ENCODE measurements at regions of chr5 and their contacts with region 1.

Region 1: DNA sequence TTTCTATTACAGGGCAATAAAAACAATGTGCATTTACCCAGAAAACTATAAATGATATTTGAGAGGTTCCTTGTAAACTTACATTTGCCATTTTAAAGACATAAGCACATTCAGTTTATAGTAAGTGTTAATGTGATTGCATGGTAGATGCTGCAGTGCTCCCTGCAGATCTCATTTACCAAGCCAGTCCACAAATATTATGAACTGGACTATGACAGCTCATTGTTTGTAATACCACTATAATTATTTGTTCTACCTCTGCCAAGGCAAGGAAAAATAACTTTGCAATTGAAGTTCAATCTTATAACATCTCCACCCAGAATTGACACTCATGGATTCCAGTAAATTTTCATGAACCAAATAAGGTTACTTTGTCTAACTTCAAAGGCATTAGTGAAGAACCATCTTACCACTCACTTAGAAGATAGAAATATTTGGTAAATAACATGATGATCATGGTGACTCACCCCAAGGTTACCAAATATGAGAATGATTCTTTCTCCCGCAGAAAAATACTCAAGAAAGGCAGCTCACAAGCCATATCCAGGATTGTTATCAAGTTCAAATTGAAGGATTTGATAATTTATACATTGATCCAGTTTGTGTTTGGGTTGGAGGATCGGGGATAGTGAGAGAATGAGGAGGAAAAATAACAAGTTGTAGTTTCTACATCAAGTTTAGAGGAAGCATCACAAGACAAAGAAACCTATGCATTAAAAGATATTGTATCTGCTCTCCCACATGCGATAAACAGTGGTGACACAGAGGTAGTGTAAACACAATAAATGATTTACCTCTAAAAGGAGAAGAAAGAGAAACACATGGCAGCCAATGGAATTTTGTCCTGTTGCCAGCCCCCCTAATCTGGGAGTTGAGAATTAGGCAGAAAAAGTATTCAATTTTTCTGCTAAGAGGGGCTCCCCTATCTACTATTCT is 29.5 kb downstream of the CDH9 start:
- DNase-seq: peak; percentile 60
- ATAC-seq: peak; percentile 87
- H3K4me3 ChIP-seq: peak overlapping the region; percentile 22
- H3K27ac ChIP-seq: peak overlapping the region; percentile 80
- H3K4me1 ChIP-seq: peaks cover 21% of the 10 kb centered on the region
- H3K27me3 ChIP-seq: no peaks in the 10 kb centered on the region
- CTCF ChIP-seq: no peak

Region 2: GRCh38 chr5:26578002-26578401 is 430.9 kb before region 1 on chr5:
- CTCF ChIA-PET with region 1: no interaction called
- POLR2A ChIA-PET with region 1: no interaction called
- intact Hi-C with region 1: loop called (anchors 5 kb)
- DNase-seq: no peak
- ATAC-seq: peak; percentile 57
- H3K4me3 ChIP-seq: no peak overlapping the region
- H3K27ac ChIP-seq: no peak overlapping the region
- H3K4me1 ChIP-seq: peaks cover 9% of the 10 kb centered on the region
- H3K27me3 ChIP-seq: no peaks in the 10 kb centered on the region
- CTCF ChIP-seq: no peak

Region 3: DNA sequence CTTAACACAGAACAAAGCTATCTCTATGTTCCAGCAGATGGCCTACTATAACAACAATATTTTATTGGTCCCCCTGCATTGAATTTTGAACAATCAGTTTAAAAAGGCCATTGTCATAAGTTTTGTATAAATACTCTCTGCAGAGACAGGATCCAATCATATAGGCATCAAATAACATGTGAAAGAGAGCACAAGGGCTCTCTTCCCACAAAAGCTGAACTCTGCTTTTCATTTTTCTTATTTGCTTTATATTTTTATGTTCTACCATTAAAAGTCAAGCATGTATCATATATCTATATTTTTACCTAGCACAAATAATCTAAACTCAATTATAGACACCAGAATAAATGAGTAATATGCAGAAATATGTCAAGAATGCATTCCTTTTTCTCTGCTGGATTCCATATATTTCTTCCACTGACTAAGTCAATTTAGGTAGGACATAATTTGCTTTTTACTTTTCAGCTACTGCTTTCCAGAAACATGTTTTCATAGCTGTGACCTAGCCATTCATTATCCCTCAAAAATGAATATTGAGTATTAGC is 114.1 kb before region 1 on chr5:
- CTCF ChIA-PET with region 1: no interaction called
- POLR2A ChIA-PET with region 1: no interaction called
- intact Hi-C with region 1: loop called (anchors 1 kb)
- DNase-seq: peak; percentile 82
- ATAC-seq: peak; percentile 94
- H3K4me3 ChIP-seq: no peak overlapping the region
- H3K27ac ChIP-seq: peak overlapping the region; percentile 10
- H3K4me1 ChIP-seq: peaks cover 27% of the 10 kb centered on the region
- H3K27me3 ChIP-seq: no peaks in the 10 kb centered on the region
- CTCF ChIP-seq: peak; percentile 49; the same call in 1 of the 2 replicates